HCT116 (cell line): ENCODE measurements at regions of chr12 and their contacts with region 1.

Region 1: GRCh38 chr12:52582971-52583456 is 9.4 kb upstream of the KRT74 start:
- DNase-seq: peak; percentile 36
- ATAC-seq: peak; percentile 96
- H3K4me3 ChIP-seq: no peak overlapping the region
- H3K27ac ChIP-seq: no peak overlapping the region
- H3K4me1 ChIP-seq: peaks cover 0 to 40% of the 10 kb centered on the region in 2 experiments; a peak in 3 of 4 replicates
- H3K27me3 ChIP-seq: no peaks in the 10 kb centered on the region
- CTCF ChIP-seq: peak; percentile 73 to 95 (median 79)
- POLR2A ChIP-seq: no peak
- RAD21 ChIP-seq: peak; percentile 93

Region 2: DNA sequence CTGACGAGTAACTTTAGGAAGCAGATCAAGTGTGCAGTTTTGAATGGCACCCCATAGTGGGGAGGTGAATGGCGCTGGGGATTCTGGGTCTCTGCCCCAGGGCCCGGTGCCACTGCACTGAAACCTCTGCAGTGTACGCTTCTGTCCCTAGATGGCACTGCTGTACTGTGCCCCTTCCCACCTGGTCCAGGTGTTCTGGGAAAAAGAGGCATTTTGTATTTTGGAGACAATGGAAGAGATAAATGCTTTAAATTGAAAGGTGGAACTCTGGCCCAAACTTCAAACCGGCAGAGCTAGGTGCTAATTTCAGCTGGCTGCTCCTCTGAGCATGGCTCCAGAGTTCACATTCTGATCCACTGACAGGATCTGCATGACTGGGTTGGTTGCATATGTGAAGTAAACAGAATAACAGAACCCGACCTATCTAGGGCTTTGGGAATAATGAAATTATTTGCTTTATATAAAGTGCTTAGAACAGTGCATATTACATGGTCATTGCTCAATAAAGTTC is 443.4 kb before region 1 on chr12:
- CTCF ChIA-PET with region 1: no interaction called
- POLR2A ChIA-PET with region 1: no interaction called
- RAD21 ChIA-PET with region 1: no interaction called
- intact Hi-C with region 1: loop called (anchors 2 kb)
- DNase-seq: no peak
- ATAC-seq: peak; percentile 73
- H3K4me3 ChIP-seq: no peak overlapping the region
- H3K27ac ChIP-seq: no peak overlapping the region
- H3K4me1 ChIP-seq: peaks cover 19 to 43% of the 10 kb centered on the region in 2 experiments
- H3K27me3 ChIP-seq: no peaks in the 10 kb centered on the region
- CTCF ChIP-seq: peak in 2 of 3 experiments; percentile 96 to 98; a peak in 4 of 6 replicates
- POLR2A ChIP-seq: no peak
- RAD21 ChIP-seq: no peak

Region 3: DNA sequence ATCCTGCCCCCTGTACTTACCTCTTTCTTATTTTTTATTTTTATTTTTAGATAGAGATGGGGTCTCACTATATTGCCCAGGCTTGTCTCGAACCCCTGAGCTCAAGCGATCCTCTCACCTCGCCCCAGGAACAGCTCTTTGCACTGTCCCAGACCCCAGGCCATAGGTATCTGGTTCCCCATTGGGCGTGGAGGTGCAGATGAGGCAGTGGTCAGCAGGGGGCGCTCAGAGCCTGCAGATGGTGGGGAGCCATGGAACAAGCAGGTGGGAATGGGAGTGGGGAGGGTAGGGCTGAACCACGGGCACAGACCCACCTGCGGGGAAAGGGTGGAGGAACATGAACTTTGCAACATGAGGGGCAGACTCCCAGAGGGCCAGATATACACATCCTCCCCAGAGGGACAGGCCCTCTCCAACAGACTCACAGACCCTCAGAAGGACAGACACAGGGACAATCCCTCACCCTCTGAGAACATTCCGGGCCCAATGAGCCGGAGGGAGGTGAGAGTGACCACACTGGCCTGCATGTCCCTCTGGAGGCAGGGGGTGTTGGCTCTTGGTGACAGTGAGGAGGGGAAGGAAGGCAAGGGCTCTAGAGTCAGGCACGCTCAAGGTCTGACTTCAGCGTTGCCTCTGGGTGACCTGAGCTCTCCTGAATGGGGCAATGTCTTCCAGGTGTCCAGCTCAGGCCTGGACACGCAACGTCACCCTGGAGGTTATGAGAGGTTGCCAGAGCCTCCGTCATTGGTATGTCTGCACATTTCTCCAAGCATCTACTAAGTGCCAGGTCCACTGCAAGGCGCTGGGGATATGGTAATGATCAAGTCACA is 426.1 kb before region 1 on chr12:
- CTCF ChIA-PET with region 1: no interaction called
- POLR2A ChIA-PET with region 1: no interaction called
- RAD21 ChIA-PET with region 1: no interaction called
- intact Hi-C with region 1: loop called (anchors 5 kb)
- DNase-seq: no peak
- ATAC-seq: peak; percentile 67
- H3K4me3 ChIP-seq: no peak overlapping the region
- H3K27ac ChIP-seq: no peak overlapping the region
- H3K4me1 ChIP-seq: peaks cover 27 to 64% of the 10 kb centered on the region in 2 experiments
- H3K27me3 ChIP-seq: no peaks in the 10 kb centered on the region
- CTCF ChIP-seq: peak in 2 of 3 experiments; percentile 95 to 98; a peak in 4 of 6 replicates
- POLR2A ChIP-seq: no peak
- RAD21 ChIP-seq: no peak

Region 4: GRCh38 chr12:52805000-52805399 is 222.0 kb after region 1 on chr12:
- CTCF ChIA-PET with region 1: no interaction called
- POLR2A ChIA-PET with region 1: no interaction called
- RAD21 ChIA-PET with region 1: no interaction called
- intact Hi-C with region 1: no loop called
- DNase-seq: no peak
- ATAC-seq: peak; percentile 70
- H3K4me3 ChIP-seq: no peak overlapping the region
- H3K27ac ChIP-seq: no peak overlapping the region
- H3K4me1 ChIP-seq: peaks cover 0 to 8% of the 10 kb centered on the region in 2 experiments; a peak in 2 of 4 replicates
- H3K27me3 ChIP-seq: peaks cover 10% of the 10 kb centered on the region; the same call in 1 of the 2 replicates
- CTCF ChIP-seq: no peak
- POLR2A ChIP-seq: no peak
- RAD21 ChIP-seq: no peak

Region 5: DNA sequence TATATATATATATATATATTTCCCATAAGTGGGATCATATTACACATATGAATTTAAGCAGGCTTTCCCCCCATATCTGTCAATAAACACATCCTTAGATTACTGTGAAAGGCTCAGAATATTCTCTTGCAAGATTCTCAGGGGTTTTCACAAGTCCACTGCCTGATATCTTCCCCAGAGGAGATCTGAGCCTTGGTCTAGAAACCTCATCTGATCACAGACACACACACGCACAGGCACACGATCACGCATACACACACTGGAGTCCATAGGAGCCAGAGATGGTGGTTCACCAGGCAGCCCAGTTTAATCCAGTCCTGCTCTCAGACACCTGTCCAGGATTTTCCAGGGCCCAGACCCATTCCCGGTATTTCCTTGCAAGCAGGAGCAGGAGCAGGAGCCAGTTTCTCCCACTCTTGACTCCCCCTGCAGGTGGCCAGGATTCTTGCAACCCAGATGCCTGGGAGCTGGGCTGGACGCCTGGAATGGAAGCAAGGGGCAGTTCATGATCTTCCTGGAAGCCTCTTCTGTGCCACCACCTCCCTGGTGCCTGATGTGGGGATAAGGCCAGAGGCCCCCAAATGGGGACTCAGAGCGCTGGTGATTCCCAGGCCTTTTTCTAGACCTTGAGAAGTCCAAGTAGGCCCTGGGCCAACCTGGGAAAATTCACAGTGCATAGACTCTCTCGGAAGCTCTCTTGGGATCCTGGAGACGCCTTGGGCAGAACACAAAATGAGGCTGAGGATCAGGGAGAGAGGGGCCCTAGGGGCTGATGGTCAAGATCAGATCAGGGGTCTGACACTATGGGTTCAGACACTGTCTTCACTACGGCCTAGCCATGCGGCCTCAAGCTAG is 282.3 kb after region 1 on chr12:
- CTCF ChIA-PET with region 1: interaction called, 29 read pairs
- POLR2A ChIA-PET with region 1: no interaction called
- RAD21 ChIA-PET with region 1: interaction called in 1 of 2 experiments, 7 read pairs
- intact Hi-C with region 1: loop called (anchors 1 kb)
- DNase-seq: peak; percentile 79
- ATAC-seq: peak; percentile 90
- H3K4me3 ChIP-seq: no peak overlapping the region
- H3K27ac ChIP-seq: peak overlapping the region; percentile 15; the same call in 1 of the 2 replicates
- H3K4me1 ChIP-seq: peaks cover 5 to 18% of the 10 kb centered on the region in 2 experiments; a peak in 3 of 4 replicates
- H3K27me3 ChIP-seq: no peaks in the 10 kb centered on the region
- CTCF ChIP-seq: peak in 2 of 3 experiments; percentile 88 to 96; a peak in 4 of 6 replicates
- POLR2A ChIP-seq: no peak
- RAD21 ChIP-seq: no peak

Region 6: DNA sequence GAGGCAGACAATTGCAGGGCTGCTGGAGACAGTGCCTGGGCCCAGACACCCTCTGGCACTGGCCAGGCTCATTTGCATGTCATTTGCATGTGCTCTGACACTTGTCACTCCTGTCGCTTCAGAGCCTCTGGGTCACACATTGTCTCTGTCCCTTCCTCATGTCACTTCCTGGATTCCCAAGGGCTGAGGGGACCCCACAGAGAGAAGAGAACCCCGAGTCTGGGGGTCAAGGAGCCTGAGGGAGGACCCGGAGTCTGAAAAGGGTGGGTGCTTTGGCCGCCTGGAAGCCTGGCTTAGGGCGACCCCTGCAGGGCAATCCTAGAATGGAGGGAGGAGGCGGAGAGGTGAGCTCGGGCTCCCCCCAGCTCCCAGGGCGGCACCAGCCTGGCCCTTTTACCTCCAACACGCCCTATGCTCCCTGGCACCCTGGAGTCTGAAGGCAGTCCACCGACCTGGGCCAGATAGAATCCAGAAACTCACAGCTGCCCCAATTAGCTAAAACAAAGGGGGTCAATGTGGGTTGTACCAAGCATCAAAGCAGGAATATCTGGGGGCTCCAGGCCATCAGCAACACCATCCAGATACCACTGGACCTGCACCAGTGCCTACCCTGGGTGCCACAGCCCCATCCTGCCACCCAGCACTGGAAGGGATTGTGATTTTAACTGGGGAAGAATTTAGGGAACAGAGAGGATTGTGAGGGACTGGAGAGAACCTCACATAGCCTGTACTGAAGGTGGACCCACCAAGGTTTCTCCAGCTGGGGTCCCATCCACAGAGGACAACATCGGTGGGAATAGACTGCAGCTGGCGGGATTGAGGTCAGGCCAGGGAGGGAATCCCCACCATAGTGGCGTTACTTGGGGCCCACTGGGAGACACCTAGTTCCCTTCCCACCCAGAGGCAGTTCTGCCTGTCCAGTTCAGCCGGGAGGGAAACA is 287.6 kb after region 1 on chr12:
- CTCF ChIA-PET with region 1: interaction called, 29 read pairs
- POLR2A ChIA-PET with region 1: no interaction called
- RAD21 ChIA-PET with region 1: interaction called, 4 to 7 read pairs
- intact Hi-C with region 1: loop called (anchors 1 kb)
- DNase-seq: no peak
- ATAC-seq: peak; percentile 71
- H3K4me3 ChIP-seq: 0 out of 4 replicates have a peak overlapping the region, but pooled peaks of 1 of the 2 experiments have one; percentile 16
- H3K27ac ChIP-seq: peak overlapping the region; percentile 81
- H3K4me1 ChIP-seq: peaks cover 48 to 64% of the 10 kb centered on the region in 2 experiments
- H3K27me3 ChIP-seq: no peaks in the 10 kb centered on the region
- CTCF ChIP-seq: peak in 2 of 3 experiments; percentile 89 to 96; a peak in 4 of 6 replicates
- POLR2A ChIP-seq: no peak
- RAD21 ChIP-seq: no peak